Activated naive CD4-positive, alpha-beta T cell treated with anti-CD3 and anti-CD28 coated beads for 36 hours (primary cell): ENCODE measurements at regions of chr1 and their contacts with region 1.

Region 1: DNA sequence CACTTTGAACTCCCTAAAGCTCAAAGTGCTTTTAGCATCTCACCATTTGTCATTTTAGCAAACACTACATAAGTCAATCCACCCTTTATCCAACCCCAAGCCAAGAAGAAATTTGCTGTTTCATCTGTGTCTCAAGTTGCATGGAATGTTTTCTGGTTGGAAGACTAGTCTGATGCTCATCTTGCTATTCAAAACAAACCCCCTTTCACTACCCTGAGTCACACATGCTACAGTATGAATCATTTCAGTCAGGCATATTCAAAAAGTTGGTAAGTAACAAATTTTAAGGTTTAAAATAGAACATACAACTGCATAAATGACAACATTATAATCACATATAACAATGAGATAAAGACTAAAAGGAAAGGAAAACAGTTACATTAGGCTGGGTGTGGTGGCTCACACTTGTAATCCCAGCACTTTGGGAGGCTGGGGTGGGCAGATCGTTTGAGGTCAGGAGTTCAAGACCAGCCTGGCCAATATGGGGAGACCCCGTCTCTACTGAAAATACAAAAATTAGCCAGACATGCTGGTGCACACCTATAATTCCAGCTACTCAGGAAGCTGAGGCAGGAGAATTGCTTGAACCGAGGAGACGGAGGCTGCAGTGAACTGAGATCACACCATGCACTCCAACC is 38.7 kb downstream of the DSTYK start:
- DNase-seq: no peak
- H3K4me3 Mint-ChIP-seq: no peak overlapping the region
- H3K27ac Mint-ChIP-seq: peak overlapping the region; percentile 74
- H3K4me1 Mint-ChIP-seq: peaks cover 31% of the 10 kb centered on the region
- H3K27me3 Mint-ChIP-seq: no peaks in the 10 kb centered on the region

Region 2: GRCh38 chr1:205211169-205211838 is 38.5 kb after region 1 on chr1 and contains the start of gene DSTYK:
- CTCF ChIA-PET with region 1: no interaction called
- intact Hi-C with region 1: loop called (anchors 5 kb)
- DNase-seq: peak; percentile 97
- H3K4me3 Mint-ChIP-seq: peak within 1 kb of the TSS; percentile 93
- H3K27ac Mint-ChIP-seq: peak within 1 kb of the TSS; percentile 95
- H3K4me1 Mint-ChIP-seq: peaks cover 57% of the 10 kb centered on the region
- H3K27me3 Mint-ChIP-seq: no peaks in the 10 kb centered on the region
- total RNA-seq, gene DSTYK: 10.9 to 11.5 TPM